Dendritic cell treated with granulocyte-macrophage colony-stimulating factor and Interleukin-4, amounts not matched to agents 40 ng/mL and 50 ng/mL, for 4 days (primary cell): ENCODE measurements at regions of chr12 and their contacts with region 1.

Region 1: GRCh38 chr12:53195516-53196420 is 11.3 kb downstream of the ITGB7 start:
- H3K4me3 Mint-ChIP-seq: no peak overlapping the region
- H3K27ac Mint-ChIP-seq: no peak overlapping the region
- H3K4me1 Mint-ChIP-seq: peaks cover 35% of the 10 kb centered on the region
- H3K27me3 Mint-ChIP-seq: peaks cover 13% of the 10 kb centered on the region

Region 2: DNA sequence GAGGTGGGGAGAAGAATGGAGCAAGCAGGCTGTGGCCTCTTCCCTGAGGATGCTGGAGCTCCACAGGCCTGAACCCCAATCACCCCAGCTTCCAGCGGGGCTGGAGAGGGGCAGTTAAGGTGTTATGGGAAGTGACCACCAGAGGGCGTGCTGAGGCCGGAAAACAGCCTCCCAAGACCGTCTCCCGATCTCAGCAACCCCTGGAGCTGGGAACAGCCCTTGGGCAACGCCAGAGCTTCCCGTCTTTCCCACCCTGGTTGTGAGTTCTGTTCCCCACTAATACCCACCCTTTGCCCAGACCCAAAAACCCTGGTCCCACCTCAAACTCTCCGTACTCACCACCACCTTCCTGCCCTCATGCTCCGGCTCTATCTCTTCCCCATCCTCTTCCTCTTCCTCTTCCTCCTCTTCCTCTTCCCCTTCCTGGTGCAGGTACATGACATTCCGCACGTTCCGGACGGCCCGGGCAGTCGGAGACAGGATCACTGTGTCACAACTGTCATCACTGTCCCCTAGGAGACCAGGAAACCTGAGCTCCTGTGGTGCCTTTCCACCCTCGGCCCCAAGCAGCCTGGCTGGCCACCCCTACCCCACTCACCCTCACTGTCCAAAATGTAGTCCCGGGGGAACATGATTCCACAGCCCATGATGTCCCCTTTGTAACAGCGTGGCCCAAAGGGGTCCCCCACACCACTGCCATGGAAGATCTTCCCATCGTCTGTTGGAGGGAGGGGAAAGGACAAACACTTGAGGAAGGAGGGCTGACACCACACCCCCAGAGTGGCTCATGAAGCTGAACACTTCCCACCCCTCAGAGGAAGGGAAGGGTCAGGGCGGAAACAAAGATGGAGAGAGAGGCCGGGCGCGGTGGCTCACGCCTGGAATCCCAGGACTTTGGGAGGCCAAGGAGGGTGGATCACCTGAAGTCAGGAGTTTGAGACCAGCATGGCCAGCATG is 129.5 kb before region 1 on chr12:
- intact Hi-C with region 1: loop called (anchors 2 kb)
- H3K4me3 Mint-ChIP-seq: no peak overlapping the region
- H3K27ac Mint-ChIP-seq: no peak overlapping the region
- H3K4me1 Mint-ChIP-seq: peaks cover 31% of the 10 kb centered on the region
- H3K27me3 Mint-ChIP-seq: peaks cover 10% of the 10 kb centered on the region

Region 3: DNA sequence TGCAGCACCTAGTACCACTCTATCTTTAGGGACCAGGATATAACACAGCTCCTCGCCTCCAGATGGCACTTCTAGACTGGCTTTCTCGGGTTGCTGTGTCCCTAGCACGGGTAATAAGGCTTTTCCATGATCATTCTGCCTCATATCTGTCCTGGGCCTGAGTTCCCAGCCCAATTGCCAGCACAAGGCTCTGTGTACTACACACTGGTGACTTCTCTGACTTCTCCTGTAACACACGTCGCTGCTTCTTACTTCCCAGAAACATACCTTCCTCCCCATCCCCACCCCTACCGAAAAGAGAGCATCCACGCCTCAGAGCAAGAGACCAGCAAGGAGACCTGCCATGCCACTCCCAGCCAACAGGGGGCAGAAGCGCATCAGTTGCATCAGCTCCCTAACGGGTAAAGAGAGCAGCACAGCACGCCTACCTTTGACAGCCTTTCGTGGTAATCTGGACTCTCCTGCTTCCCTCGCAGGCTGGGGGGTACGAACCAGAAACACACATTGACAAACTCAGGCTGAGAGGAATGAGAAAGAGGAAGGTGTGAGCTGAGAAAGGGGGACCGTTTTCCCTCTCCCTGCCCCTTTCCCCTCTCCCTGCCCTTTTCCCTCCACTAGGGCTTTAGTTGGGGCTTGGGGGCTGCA is 36.5 kb before region 1 on chr12:
- intact Hi-C with region 1: loop called (anchors 1 kb)
- H3K4me3 Mint-ChIP-seq: no peak overlapping the region
- H3K27ac Mint-ChIP-seq: no peak overlapping the region
- H3K4me1 Mint-ChIP-seq: peaks cover 9% of the 10 kb centered on the region
- H3K27me3 Mint-ChIP-seq: peaks cover 1% of the 10 kb centered on the region

Region 4: GRCh38 chr12:53174881-53175491 is 20.8 kb before region 1 on chr12:
- intact Hi-C with region 1: loop called (anchors 1 kb)
- H3K4me3 Mint-ChIP-seq: no peak overlapping the region
- H3K27ac Mint-ChIP-seq: no peak overlapping the region
- H3K4me1 Mint-ChIP-seq: peaks cover 27% of the 10 kb centered on the region
- H3K27me3 Mint-ChIP-seq: no peaks in the 10 kb centered on the region

Region 5: DNA sequence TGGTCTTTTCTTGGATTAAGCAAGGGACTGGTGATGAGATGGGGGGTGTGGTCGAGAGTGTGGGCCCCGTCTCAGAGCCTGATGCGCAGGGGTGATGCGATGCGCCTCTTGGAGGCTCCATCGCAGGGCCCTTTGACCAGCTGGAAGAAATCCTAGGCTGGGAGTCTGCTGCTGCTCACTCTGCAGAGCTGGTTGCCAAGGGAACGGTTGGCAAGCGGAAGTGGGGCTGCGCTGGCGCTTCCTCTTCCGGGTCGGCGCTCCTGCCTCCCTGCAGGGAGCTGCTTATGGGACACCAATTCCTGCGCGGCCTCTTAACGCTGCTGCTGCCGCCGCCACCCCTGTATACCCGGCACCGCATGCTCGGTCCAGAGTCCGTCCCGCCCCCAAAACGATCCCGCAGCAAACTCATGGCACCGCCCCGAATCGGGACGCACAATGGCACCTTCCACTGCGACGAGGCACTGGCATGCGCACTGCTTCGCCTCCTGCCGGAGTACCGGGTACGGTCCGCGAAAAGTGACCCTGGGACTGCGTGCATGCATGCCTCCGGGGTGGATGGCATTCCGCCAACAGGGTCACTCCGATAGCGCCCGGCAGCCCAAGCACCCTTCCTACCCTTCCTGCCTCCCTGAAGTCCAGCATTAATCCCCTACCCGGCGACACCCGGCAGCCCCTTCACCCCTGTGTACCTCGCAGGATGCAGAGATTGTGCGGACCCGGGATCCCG is 103.8 kb after region 1 on chr12 and contains the start of gene MYG1:
- intact Hi-C with region 1: no loop called
- H3K4me3 Mint-ChIP-seq: peak within 1 kb of the TSS; percentile 83
- H3K27ac Mint-ChIP-seq: peak within 1 kb of the TSS; percentile 92
- H3K4me1 Mint-ChIP-seq: peaks cover 80% of the 10 kb centered on the region
- H3K27me3 Mint-ChIP-seq: no peaks in the 10 kb centered on the region